HepG2 (cell line): ENCODE measurements at regions of chr12 and their contacts with region 1.

Region 1: DNA sequence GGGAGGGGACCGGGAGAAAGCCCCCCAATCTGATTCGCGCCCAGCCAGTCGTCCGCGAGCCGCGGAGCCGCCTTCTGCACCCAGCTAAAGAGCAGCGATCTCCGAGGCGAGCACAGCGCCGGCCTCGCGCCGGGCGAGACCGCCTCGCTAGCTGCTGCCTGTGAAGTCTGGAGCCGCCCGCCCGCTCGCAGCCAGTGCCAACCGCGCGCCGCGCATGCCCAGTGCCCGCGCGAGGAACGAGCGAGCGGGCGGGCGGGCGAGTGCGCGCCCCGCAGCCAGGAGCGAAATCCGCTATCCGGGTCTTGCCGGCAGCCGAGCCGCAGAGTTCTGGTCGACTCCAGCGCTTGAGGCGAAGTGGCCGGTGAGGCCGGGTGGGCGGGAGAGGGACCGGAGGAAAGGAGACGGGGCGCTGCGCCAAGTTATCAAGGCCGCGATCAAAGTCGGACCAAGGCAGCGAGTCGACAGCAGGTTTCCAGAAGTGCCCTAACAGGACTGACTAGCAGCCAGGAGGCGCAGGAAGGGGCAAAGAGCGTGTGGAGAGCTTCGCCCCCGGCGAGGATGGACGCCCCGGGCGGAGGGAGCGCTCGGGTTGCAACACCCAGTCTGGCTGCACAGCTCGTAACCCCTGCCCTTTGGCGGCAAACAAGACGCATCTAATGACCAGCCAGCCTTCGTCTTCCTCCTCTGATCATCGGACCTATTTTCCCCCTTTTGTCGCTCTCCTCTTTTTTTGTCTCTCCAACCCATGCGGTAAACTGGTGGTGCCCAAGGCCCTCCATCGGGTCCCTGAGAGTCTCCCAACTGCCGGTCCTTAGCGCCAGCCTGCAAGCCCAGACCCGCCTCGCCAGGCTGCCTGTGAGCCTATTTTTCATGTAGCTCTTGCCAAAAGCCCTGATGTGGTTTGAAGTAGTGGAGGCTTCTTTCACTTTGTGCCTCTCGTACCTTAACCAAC is at the start of gene EPS8:
- DNase-seq: peak; percentile 83
- ATAC-seq: peak; percentile 90
- H3K4me3 ChIP-seq: peak within 1 kb of the TSS; percentile 84 to 92 (median 91)
- H3K27ac ChIP-seq: peak within 1 kb of the TSS; percentile 92
- H3K4me1 ChIP-seq: peaks cover 43% of the 10 kb centered on the region
- H3K27me3 ChIP-seq: no peaks in the 10 kb centered on the region; a peak in 1 of 5 replicates
- CTCF ChIP-seq: no peak; the same call in none of the 2 replicates
- EP300 ChIP-seq: peak in 1 of 2 experiments; percentile 18; a peak in 1 of 4 replicates
- POLR2A ChIP-seq: peak; percentile 81 to 93
- RAD21 ChIP-seq: peak; percentile 54
- total RNA-seq, gene EPS8: 43.4 and 51.6 TPM in 2 replicates

Region 2: GRCh38 chr12:15712823-15713660 is 76.5 kb before region 1 on chr12:
- CTCF ChIA-PET with region 1: no interaction called
- POLR2A ChIA-PET with region 1: interaction called, 14 read pairs
- in situ Hi-C with region 1: no loop called
- intact Hi-C with region 1: no loop called
- DNase-seq: peak; percentile 86
- ATAC-seq: peak; percentile 94
- H3K4me3 ChIP-seq: peak overlapping the region; percentile 59 to 66 (median 59); a peak in 5 of 6 replicates
- H3K27ac ChIP-seq: peak overlapping the region; percentile 84
- H3K4me1 ChIP-seq: peaks cover 64% of the 10 kb centered on the region
- H3K27me3 ChIP-seq: no peaks in the 10 kb centered on the region
- CTCF ChIP-seq: no peak
- EP300 ChIP-seq: peak in 1 of 2 experiments; percentile 49; a peak in 1 of 4 replicates
- POLR2A ChIP-seq: no peak
- RAD21 ChIP-seq: no peak

Region 3: DNA sequence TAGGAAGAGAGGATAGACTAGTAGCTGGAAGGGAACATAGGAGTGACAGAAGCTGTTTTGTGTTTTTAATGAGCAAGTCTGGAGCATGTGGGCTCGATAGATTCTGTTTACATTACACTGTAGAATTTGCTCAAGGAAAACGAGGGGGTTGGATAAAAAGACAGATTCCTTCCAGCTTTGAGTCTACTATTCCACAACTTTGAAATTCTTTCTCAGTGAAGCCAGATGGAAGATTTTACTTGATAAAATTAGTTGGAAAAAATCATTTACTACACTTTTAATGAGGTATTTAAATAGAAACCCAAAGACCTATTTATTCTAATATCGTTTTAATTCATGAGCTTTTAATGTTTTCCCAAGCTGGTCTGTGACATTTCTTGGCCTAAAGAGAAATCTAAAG is 19.2 kb after region 1 on chr12:
- CTCF ChIA-PET with region 1: no interaction called
- POLR2A ChIA-PET with region 1: interaction called, 12 read pairs
- in situ Hi-C with region 1: no loop called
- intact Hi-C with region 1: no loop called
- DNase-seq: no peak
- ATAC-seq: no peak
- H3K4me3 ChIP-seq: no peak overlapping the region
- H3K27ac ChIP-seq: no peak overlapping the region
- H3K4me1 ChIP-seq: peaks cover 46% of the 10 kb centered on the region
- H3K27me3 ChIP-seq: no peaks in the 10 kb centered on the region
- CTCF ChIP-seq: no peak
- EP300 ChIP-seq: no peak
- POLR2A ChIP-seq: no peak
- RAD21 ChIP-seq: no peak

Region 4: GRCh38 chr12:15823360-15824128 is 34.0 kb after region 1 on chr12:
- CTCF ChIA-PET with region 1: no interaction called
- POLR2A ChIA-PET with region 1: no interaction called
- in situ Hi-C with region 1: no loop called
- intact Hi-C with region 1: loop called (anchors 2 kb)
- DNase-seq: peak; percentile 88
- ATAC-seq: peak; percentile 85
- H3K4me3 ChIP-seq: no peak overlapping the region; a peak in 1 of 6 replicates
- H3K27ac ChIP-seq: peak overlapping the region; percentile 50
- H3K4me1 ChIP-seq: peaks cover 50% of the 10 kb centered on the region
- H3K27me3 ChIP-seq: no peaks in the 10 kb centered on the region
- CTCF ChIP-seq: no peak
- EP300 ChIP-seq: peak; percentile 75 to 90
- POLR2A ChIP-seq: no peak
- RAD21 ChIP-seq: no peak

Region 5: DNA sequence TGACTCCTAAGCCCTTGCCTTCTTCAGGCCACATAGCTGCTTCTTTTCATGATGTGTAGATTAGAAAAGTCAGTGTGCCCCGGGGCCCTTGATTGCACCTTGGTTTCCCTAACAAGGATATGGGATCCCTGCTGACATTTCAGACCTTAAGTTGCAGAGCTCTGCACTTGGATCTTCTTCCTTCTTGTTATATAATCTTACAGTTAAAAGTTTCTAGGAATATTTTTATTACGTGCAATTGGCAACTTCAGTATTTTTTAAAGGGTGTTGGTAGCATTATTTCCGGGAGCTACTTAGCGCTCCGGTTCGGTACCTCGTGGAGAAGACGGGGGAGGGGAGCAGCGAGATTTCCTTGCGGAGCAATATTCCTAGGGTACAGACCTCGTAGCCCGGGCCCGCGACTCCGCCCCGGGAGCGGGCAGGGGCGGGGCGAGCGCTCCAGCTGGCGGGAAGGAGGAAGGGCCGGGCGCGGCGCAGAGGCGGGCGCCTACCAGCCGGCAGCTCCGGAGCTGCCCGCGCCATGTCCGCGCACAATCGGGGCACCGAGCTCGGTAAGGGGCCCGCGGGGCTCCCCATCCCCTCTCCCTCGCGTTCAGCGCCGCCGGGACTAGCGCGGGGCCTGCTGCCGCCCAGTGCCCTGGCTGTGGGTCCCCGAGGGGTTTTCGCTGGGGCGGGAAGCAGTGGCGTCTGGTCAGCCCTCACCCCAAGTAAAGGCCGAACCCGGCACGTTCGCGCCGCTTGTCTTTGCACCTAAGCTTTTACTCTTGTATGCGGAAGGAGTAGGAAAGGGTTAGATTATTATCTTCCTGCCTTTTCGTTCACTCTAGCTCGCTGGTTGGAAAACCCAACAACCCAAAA is 121.6 kb after region 1 on chr12 and contains the start of gene DERA:
- CTCF ChIA-PET with region 1: no interaction called
- POLR2A ChIA-PET with region 1: no interaction called
- in situ Hi-C with region 1: no loop called
- intact Hi-C with region 1: no loop called
- DNase-seq: peak; percentile 52
- ATAC-seq: peak; percentile 99
- H3K4me3 ChIP-seq: peak within 1 kb of the TSS; percentile 80 to 95 (median 91)
- H3K27ac ChIP-seq: peak within 1 kb of the TSS; percentile 88
- H3K4me1 ChIP-seq: peaks cover 35% of the 10 kb centered on the region
- H3K27me3 ChIP-seq: no peaks in the 10 kb centered on the region
- CTCF ChIP-seq: no peak
- EP300 ChIP-seq: no peak
- POLR2A ChIP-seq: peak; percentile 78 to 81
- RAD21 ChIP-seq: 0 out of 2 replicates have a peak, but pooled peaks have one; percentile 47
- total RNA-seq, gene DERA: 51.3 and 59.9 TPM in 2 replicates